Naive thymus-derived CD4-positive, alpha-beta T cell (primary cell): ENCODE measurements at regions of chr9 and their contacts with region 1.

Region 1: DNA sequence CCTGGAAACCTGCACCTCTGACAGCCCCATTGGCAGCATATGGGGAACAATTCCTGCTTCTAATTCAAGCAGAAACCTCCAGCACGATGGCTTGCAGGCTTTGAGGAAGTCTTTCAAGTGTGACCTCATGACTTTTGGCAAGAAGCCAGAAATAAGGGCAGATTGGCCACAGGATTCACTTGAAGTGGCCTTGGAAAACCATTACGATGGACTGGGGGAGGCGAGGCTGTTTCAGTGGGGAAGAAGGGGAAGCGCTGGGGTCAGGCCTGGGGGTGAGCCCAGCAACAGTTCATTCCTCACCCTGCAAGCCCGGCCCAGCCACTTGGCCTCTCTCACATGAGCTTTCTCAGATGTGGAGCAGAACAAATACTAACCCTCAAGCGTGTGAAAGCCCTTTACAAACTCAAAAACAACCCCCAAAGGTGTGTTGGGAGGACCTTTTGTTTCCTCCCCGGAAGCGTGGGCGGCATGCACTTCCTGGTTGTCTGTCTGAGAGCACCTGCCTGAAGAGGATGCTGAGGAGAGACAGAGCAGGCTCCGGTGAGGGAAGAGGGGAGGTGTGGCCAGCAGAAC is 26.9 kb upstream of the EEIG1 start:
- DNase-seq: peak; percentile 61 to 97 (median 96)
- ATAC-seq: peak; percentile 95
- H3K4me3 ChIP-seq: peak overlapping the region; percentile 48
- H3K4me3 Mint-ChIP-seq: peak overlapping the region; percentile 76 to 87 (median 86)
- H3K27ac ChIP-seq: peak overlapping the region; percentile 66
- H3K27ac Mint-ChIP-seq: peak overlapping the region; percentile 93 to 100 (median 98)
- H3K4me1 ChIP-seq: peaks cover 39 to 76% of the 10 kb centered on the region in 2 donors
- H3K4me1 Mint-ChIP-seq: peaks cover 28 to 93% (median 65%) of the 10 kb centered on the region in 7 donors
- H3K27me3 ChIP-seq: no peaks in the 10 kb centered on the region
- H3K27me3 Mint-ChIP-seq: peaks cover 0 to 3% (median 0%) of the 10 kb centered on the region in 5 donors

Region 2: GRCh38 chr9:127970401-127971313 is 37.0 kb before region 1 on chr9:
- CTCF ChIA-PET with region 1: interaction called, 4 read pairs
- POLR2A ChIA-PET with region 1: interaction called, 1,719 read pairs
- intact Hi-C with region 1: loop called in 1 of 2 experiments (anchors 5 kb)
- DNase-seq: peak in 8 of 9 donors; percentile 68 to 84 (median 80)
- ATAC-seq: peak; percentile 72
- H3K4me3 ChIP-seq: peak overlapping the region; percentile 93
- H3K4me3 Mint-ChIP-seq: peak overlapping the region; percentile 89 to 99 (median 96)
- H3K27ac ChIP-seq: peak overlapping the region; percentile 84
- H3K27ac Mint-ChIP-seq: peak overlapping the region; percentile 90 to 99 (median 97)
- H3K4me1 ChIP-seq: peaks cover 61 to 93% of the 10 kb centered on the region in 2 donors
- H3K4me1 Mint-ChIP-seq: peaks cover 69 to 95% (median 83%) of the 10 kb centered on the region in 7 donors
- H3K27me3 ChIP-seq: no peaks in the 10 kb centered on the region
- H3K27me3 Mint-ChIP-seq: no peaks in the 10 kb centered on the region

Region 3: DNA sequence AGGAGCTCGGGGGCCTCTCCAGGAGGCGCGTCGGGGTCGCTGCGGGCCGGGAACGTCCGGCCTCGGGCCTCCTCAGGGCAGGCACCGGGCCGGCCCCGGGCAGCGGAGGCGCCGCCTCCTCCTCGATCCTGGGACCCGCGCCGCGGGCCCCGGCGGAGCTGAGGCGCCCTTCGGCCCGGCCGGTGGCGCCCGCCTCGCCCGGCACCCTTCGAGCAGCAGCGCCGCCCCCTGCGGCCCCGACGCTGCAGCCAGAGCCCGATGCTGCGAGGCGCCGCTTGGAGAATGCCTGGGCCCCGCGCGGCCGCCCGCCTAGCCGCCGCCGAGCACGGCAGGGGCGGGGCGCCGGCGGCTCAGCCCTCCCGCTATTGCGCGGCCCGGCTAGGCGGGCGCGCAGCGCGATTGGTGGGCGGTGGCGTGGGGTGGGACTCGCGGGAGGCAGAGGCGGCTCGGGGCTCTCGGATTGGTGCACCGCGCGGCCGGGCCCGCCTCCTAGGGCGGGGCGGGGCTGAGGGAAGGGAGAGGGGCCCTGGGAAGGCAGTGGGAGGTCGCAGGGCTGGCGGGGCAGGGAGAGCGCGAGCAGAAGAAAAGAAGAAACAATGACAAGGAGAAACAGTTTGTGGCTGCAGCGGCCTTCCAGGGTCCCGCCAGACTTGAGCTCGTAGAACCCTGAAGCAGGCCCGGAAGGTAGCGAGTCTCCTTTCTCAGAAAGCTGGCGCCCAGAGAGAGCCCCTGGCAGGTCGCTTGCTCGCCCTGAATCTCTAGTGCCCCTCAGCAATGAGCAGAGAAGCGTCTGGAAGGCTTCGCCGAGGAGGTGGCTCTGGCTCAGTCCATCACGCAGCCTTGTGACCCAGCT is 26.7 kb before region 1 on chr9 and contains the start of gene EEIG1:
- CTCF ChIA-PET with region 1: interaction called, 4 read pairs
- POLR2A ChIA-PET with region 1: interaction called, 1,719 read pairs
- intact Hi-C with region 1: loop called (anchors 1 kb)
- DNase-seq: peak; percentile 95 to 100 (median 99)
- ATAC-seq: peak; percentile 96
- H3K4me3 ChIP-seq: peak within 1 kb of the TSS; percentile 93
- H3K4me3 Mint-ChIP-seq: peak within 1 kb of the TSS; percentile 93 to 99 (median 98)
- H3K27ac ChIP-seq: peak within 1 kb of the TSS; percentile 84
- H3K27ac Mint-ChIP-seq: peak within 1 kb of the TSS; percentile 92 to 100 (median 98)
- H3K4me1 ChIP-seq: peaks cover 25 to 38% of the 10 kb centered on the region in 2 donors
- H3K4me1 Mint-ChIP-seq: peaks cover 35 to 47% (median 42%) of the 10 kb centered on the region in 7 donors
- H3K27me3 ChIP-seq: no peaks in the 10 kb centered on the region
- H3K27me3 Mint-ChIP-seq: no peaks in the 10 kb centered on the region
- total RNA-seq, gene EEIG1: 252 to 664 (median 347) TPM

Region 4: GRCh38 chr9:127987103-127987614 is 20.5 kb before region 1 on chr9:
- CTCF ChIA-PET with region 1: interaction called, 4 read pairs
- POLR2A ChIA-PET with region 1: interaction called, 1,719 read pairs
- intact Hi-C with region 1: loop called in 1 of 2 experiments (anchors 1 kb)
- DNase-seq: no peak
- ATAC-seq: no peak
- H3K4me3 ChIP-seq: no peak overlapping the region
- H3K4me3 Mint-ChIP-seq: no peak overlapping the region
- H3K27ac ChIP-seq: no peak overlapping the region
- H3K27ac Mint-ChIP-seq: peak overlapping the region in 6 of 9 donors; percentile 9 to 80 (median 60)
- H3K4me1 ChIP-seq: peaks cover 0 to 52% of the 10 kb centered on the region in 2 donors
- H3K4me1 Mint-ChIP-seq: peaks cover 27 to 65% (median 58%) of the 10 kb centered on the region in 7 donors
- H3K27me3 ChIP-seq: no peaks in the 10 kb centered on the region
- H3K27me3 Mint-ChIP-seq: no peaks in the 10 kb centered on the region